ENCODE measurements at regions of chr17 and their contacts with region 1.

Region 1: GRCh38 chr17:81512560-81513371 is at the start of gene ACTG1:
- DNase-seq: peak; percentile 98
- H3K4me3 ChIP-seq: peak within 1 kb of the TSS; percentile 88 to 94 (median 91)
- H3K27ac ChIP-seq: peak within 1 kb of the TSS; percentile 100
- H3K4me1 ChIP-seq: peaks cover 31 to 63% (median 53%) of the 10 kb centered on the region in 4 donors
- H3K27me3 ChIP-seq: no peaks in the 10 kb centered on the region
- CTCF ChIP-seq: no peak
- EP300 ChIP-seq: no peak
- POLR2A ChIP-seq: peak; percentile 89
- total RNA-seq, gene ACTG1: 972 to 1,850 (median 1,126) TPM

Region 2: DNA sequence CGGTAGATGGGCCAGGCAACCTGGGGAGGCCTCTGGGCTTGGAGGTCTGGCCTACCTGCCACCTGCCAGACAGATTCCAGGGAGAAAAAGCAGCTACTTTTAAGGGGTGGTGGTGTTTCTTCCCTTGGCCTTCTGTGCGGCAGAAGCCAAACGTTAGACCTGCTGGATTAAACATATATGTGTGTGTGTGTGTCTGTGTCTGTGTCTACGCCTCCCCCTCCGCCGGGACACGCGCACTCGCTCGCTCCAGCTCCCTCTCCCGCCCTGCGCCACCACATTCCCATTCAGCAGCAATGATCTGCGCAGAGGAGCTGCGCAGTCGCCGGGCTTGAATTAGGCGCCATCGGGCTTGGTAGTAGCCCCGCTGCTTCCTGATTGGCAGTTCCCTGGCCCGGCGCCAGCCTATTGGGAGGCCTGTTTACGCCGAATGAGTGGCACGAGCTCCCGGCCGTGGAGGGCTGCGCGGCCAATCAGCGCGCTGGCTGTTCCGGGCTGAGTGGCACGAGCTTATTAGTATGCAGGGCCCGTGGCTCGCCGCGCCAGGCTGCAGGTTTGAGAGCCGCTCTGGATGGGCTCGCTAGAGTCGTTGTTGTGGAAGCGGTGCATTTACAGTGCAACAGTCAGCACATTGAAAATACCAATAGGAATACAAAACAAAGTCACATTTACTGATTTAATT is 117.7 kb before region 1 on chr17 and contains the start of gene BAHCC1:
- intact Hi-C with region 1: loop called (anchors 5 kb)
- DNase-seq: peak; percentile 100
- H3K4me3 ChIP-seq: peak within 1 kb of the TSS; percentile 79 to 95 (median 90)
- H3K27ac ChIP-seq: peak within 1 kb of the TSS; percentile 96 to 100 (median 99)
- H3K4me1 ChIP-seq: peaks cover 34 to 60% (median 58%) of the 10 kb centered on the region in 4 donors
- H3K27me3 ChIP-seq: no peaks in the 10 kb centered on the region
- CTCF ChIP-seq: peak in 1 of 3 experiments; percentile 11
- EP300 ChIP-seq: no peak
- POLR2A ChIP-seq: peak; percentile 85
- total RNA-seq, gene BAHCC1: 15.9 to 38.1 (median 21.1) TPM

Region 3: GRCh38 chr17:81553018-81553615 is 40.4 kb after region 1 on chr17:
- intact Hi-C with region 1: loop called (anchors 5 kb)
- DNase-seq: peak; percentile 97
- H3K4me3 ChIP-seq: peak overlapping the region; percentile 70 to 92 (median 80)
- H3K27ac ChIP-seq: peak overlapping the region; percentile 72 to 88 (median 82)
- H3K4me1 ChIP-seq: peaks cover 24 to 40% (median 35%) of the 10 kb centered on the region in 4 donors
- H3K27me3 ChIP-seq: no peaks in the 10 kb centered on the region
- CTCF ChIP-seq: no peak
- EP300 ChIP-seq: no peak
- POLR2A ChIP-seq: no peak

Region 4: DNA sequence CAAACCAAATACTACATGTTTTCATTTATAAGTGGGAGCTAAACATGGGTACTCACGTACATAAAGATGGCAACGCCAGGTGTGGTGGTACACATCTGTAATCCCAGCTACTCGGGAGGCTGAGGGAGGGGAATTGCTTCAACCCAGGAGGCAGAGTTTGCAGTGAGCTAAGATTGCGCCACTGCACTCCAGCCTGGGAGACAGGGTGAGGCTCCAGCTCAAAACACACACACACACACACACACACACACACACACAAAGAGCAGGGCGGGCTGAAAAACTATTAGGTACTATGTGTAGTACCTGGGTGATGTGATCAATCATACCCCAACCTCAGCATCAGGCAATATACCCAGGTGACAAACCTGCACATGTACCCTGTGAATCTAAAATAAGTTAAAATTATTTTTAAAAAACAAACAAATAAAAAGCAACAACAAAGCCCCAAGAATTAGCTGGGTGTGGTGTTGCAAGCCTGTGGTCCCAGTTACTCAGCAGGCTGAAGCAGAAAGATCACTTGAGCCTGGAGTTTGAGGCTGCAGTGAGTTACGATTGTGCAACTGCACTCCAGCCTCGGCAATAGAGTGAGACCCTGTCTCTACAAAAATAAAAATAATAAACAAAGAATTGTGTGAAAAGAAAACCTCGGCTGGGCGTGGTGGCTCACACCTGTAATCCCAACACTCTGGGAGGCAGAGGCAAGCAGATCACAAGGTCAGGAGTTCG is 51.3 kb after region 1 on chr17:
- intact Hi-C with region 1: no loop called
- DNase-seq: no peak
- H3K4me3 ChIP-seq: no peak overlapping the region
- H3K27ac ChIP-seq: peak overlapping the region in 2 of 4 donors; percentile 12 to 86
- H3K4me1 ChIP-seq: peaks cover 26 to 37% (median 34%) of the 10 kb centered on the region in 4 donors
- H3K27me3 ChIP-seq: no peaks in the 10 kb centered on the region
- CTCF ChIP-seq: no peak
- EP300 ChIP-seq: no peak
- POLR2A ChIP-seq: no peak

Measured in esophagus muscularis mucosa (tissue), 4 donors.